Esophagus squamous epithelium (tissue), 5 donors: ENCODE measurements at regions of chr14 and their contacts with region 1.

Region 1: DNA sequence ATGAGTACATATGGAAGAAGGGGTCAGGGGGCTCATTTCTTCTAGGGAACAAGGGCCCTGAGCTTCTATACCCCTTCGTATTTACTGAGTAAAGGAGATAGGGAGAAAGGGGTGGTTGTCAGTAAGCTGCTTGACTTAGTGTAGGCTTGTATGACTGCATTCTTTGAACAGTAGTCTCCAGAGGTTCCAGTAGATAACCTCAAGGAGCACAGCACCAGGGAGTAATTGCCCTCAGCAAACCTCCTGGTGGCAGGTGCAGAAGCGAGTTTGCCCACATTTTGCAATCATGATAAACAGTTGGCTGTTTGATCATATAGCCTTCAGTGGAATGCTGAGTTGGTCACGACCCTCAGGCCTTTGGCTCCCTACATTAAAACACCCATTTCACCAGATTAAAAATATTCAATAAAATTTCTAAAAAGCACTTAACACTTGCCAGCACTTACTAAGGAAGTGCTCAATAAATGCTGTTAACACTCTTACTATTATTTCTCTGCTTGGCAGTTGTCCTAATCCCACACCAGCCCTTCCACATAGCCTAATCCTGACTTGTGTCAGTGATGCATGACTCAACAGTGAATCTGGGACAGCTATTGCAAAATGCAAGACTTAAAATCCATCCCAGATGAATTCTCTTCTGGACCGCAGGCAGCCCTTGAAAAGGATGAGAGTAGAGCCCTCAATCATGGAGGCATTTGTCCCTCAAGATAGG is 3.7 kb upstream of the DHRS4L2 start:
- DNase-seq: no peak
- H3K4me3 ChIP-seq: no peak overlapping the region
- H3K27ac ChIP-seq: peak overlapping the region in 3 of 4 donors; percentile 50 to 82 (median 76)
- H3K4me1 ChIP-seq: peaks cover 36 to 58% (median 41%) of the 10 kb centered on the region in 3 donors
- H3K27me3 ChIP-seq: no peaks in the 10 kb centered on the region
- CTCF ChIP-seq: no peak
- POLR2A ChIP-seq: no peak

Region 2: GRCh38 chr14:24032721-24033418 is 47.8 kb after region 1 on chr14:
- intact Hi-C with region 1: loop called (anchors 5 kb)
- DNase-seq: no peak
- H3K4me3 ChIP-seq: no peak overlapping the region
- H3K27ac ChIP-seq: peak overlapping the region in 2 of 4 donors; percentile 1 to 55
- H3K4me1 ChIP-seq: peaks cover 0 to 53% (median 16%) of the 10 kb centered on the region in 3 donors
- H3K27me3 ChIP-seq: no peaks in the 10 kb centered on the region
- CTCF ChIP-seq: no peak
- POLR2A ChIP-seq: no peak